K562 (cell line): ENCODE measurements at regions of chr6 and their contacts with region 1.

Region 1: DNA sequence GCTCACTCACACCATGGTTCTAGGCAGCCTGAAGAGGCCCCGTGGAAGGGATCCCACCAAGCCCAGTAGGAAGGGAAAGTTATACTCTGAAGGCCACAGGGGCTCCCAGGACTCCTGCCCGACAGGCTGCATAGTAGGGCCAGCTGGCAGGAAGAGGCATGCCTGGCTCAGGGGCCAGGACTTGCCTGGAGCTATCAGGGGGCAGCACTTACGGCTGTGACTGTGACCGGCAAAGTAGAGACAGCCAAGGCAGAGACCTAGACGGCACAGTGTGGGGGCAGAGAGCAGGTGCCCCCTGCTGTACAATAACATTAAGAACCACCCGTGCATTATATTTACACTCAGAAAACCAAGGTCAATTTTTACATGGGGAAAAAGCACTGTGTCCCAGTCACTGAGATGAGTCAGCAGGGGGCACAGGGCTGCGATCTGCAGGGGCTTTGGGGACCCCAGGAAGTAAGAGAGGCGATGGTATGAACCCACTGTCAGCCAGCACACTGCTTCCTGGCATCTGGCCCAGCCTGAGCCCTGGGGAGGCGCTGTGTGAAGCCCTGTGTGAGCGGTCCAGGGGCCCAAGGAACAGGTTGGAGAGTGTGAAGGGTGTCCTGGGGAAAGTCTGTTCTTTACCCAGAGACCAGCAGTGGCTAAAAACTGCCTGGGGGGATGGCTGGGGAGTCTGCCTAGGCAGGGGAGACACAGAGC is 9.9 kb downstream of the CCDC167 start:
- DNase-seq: peak in 2 of 4 experiments; percentile 50 to 51
- ATAC-seq: peak; percentile 55
- H3K4me3 ChIP-seq: no peak overlapping the region
- H3K27ac ChIP-seq: no peak overlapping the region
- H3K4me1 ChIP-seq: peaks cover 6 to 29% of the 10 kb centered on the region in 2 experiments; a peak in 4 of 5 replicates
- H3K27me3 ChIP-seq: no peaks in the 10 kb centered on the region
- CTCF ChIP-seq: peak; percentile 41 to 49 (median 48); a peak in 5 of 6 replicates
- EP300 ChIP-seq: no peak
- POLR2A ChIP-seq: no peak
- RAD21 ChIP-seq: peak in 1 of 2 experiments; percentile 37; a peak in 1 of 4 replicates

Region 2: DNA sequence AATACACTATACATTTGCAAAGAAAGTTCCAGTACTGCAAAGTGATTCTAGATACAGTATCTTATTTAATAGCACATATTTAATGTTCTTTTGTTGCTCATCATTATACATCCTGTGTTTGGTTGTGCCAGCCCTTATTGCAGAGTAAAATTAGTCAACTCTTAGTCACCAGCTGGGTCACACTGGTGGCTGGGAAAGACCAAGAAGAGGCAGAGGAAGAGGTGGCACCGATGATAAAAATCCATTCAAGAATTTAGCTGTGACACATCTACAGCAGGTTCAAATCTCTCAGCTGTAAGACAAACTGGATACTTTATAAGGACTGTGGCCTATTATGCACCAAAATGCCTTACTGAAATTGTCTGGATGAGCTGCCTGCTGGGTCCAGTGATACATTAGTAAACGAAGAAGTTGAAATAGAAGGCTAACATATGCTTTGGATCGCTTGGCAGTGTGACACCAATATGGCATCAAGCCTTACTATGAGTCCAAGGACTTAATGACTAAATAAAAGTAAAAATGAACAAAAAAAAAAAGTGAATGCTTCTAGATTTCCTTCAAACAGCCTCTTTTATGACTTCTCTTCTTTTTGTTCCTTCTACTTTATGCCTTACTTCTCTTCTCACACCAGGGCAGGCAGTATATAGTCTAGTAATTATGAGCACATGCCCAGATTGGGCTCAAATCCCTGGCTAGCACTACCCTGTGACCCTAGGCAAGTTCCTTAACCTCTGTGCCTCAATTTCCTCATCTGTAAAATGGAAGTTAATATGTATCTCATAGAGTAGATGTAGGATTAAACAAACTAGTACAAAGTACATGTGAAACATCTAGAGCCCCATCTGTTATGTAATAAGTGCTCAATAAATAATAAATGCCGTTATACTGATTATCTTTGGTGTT is 165.4 kb before region 1 on chr6:
- CTCF ChIA-PET with region 1: interaction called, 4 read pairs
- POLR2A ChIA-PET with region 1: no interaction called
- in situ Hi-C with region 1: no loop called
- intact Hi-C with region 1: loop called (anchors 5 kb)
- DNase-seq: no peak
- ATAC-seq: no peak
- H3K4me3 ChIP-seq: no peak overlapping the region
- H3K27ac ChIP-seq: no peak overlapping the region
- H3K4me1 ChIP-seq: no peaks in the 10 kb centered on the region; a peak in 1 of 5 replicates
- H3K27me3 ChIP-seq: no peaks in the 10 kb centered on the region
- CTCF ChIP-seq: no peak
- EP300 ChIP-seq: no peak
- POLR2A ChIP-seq: no peak
- RAD21 ChIP-seq: no peak